ENCODE measurements at regions of chr5 and their contacts with region 1.

Region 1: DNA sequence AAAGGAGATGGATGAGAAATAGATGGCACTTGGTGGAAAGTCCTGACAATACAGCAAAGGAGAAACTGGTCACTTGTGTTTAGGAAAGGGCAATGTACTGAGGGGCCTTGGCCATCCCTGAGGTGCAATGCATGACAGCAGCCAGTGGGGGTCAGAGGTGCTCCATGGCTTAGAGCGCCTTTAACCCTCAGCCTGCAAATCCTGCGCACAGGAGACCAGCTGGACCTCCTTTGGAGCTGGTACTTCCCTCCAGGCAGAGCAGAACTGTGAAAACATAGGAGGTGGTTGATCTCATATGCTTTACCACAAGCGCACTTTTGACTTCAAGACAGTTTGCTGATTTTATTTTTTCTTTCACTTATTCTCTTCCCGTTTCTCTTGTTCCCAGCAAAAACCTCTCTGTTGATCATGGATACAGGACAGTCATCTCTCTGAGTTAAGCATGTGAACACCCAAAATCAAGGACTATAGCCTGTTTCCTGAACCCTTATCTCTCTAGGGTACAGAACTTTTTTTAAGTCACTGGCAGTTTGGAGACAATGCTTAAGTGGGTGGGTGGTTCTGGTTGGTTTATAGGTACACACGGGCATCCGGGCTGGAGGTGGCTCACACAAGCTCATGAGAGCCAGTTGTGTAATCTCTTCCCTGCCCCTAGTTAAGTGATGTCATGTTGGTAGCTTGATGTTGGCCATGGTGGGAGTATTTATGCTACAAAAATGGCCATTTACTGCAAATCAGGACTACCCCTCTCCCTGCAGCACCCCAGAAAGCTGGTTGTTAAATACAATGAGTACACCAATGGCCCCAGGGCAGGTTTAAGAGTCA is 37.6 kb upstream of the ANKRD55 start:
- DNase-seq: peak; percentile 83 to 84
- H3K4me3 ChIP-seq: no peak overlapping the region
- H3K27ac ChIP-seq: peak overlapping the region; percentile 44
- H3K4me1 ChIP-seq: peaks cover 11% of the 10 kb centered on the region
- H3K27me3 ChIP-seq: no peaks in the 10 kb centered on the region
- CTCF ChIP-seq: peak; percentile 98

Region 2: GRCh38 chr5:55982957-55983381 is 287.8 kb before region 1 on chr5:
- CTCF ChIA-PET with region 1: interaction called, 8 read pairs
- POLR2A ChIA-PET with region 1: no interaction called
- intact Hi-C with region 1: loop called (anchors 1 kb)
- DNase-seq: no peak
- H3K4me3 ChIP-seq: no peak overlapping the region
- H3K27ac ChIP-seq: no peak overlapping the region
- H3K4me1 ChIP-seq: no peaks in the 10 kb centered on the region
- H3K27me3 ChIP-seq: no peaks in the 10 kb centered on the region
- CTCF ChIP-seq: peak; percentile 43

Region 3: DNA sequence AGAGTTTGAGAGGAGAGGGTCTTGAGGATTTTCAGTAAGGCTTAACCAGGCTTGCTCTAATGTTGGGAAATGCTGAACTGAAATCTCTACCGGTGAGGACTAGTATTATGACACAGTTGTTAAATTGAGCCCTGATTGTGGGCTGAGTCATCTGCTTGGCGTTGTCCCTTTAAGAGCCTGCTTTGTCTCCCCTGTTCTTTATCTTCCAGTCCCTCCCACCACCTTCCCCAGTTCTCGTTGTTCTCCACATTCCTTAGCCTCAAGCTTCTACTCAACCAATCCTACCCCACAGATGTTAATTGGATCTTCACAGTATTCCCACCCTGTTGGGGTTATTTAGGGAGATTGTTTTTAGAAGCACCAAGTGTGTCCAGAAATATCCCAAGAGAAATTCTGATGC is 95.3 kb before region 1 on chr5:
- CTCF ChIA-PET with region 1: no interaction called
- POLR2A ChIA-PET with region 1: no interaction called
- intact Hi-C with region 1: no loop called
- DNase-seq: peak; percentile 16 to 57
- H3K4me3 ChIP-seq: no peak overlapping the region
- H3K27ac ChIP-seq: no peak overlapping the region
- H3K4me1 ChIP-seq: peaks cover 21% of the 10 kb centered on the region
- H3K27me3 ChIP-seq: no peaks in the 10 kb centered on the region
- CTCF ChIP-seq: no peak

Region 4: GRCh38 chr5:56259002-56259511 is 11.7 kb before region 1 on chr5:
- CTCF ChIA-PET with region 1: no interaction called
- POLR2A ChIA-PET with region 1: no interaction called
- intact Hi-C with region 1: no loop called
- DNase-seq: peak in 1 of 2 experiments; percentile 67
- H3K4me3 ChIP-seq: no peak overlapping the region
- H3K27ac ChIP-seq: peak overlapping the region; percentile 40
- H3K4me1 ChIP-seq: peaks cover 10% of the 10 kb centered on the region
- H3K27me3 ChIP-seq: no peaks in the 10 kb centered on the region
- CTCF ChIP-seq: no peak

Region 5: GRCh38 chr5:56286015-56286884 is 15.5 kb after region 1 on chr5:
- CTCF ChIA-PET with region 1: no interaction called
- POLR2A ChIA-PET with region 1: no interaction called
- intact Hi-C with region 1: no loop called
- DNase-seq: no peak
- H3K4me3 ChIP-seq: no peak overlapping the region
- H3K27ac ChIP-seq: no peak overlapping the region
- H3K4me1 ChIP-seq: peaks cover 19% of the 10 kb centered on the region
- H3K27me3 ChIP-seq: no peaks in the 10 kb centered on the region
- CTCF ChIP-seq: no peak

Region 6: GRCh38 chr5:56429082-56429891 is 158.5 kb after region 1 on chr5:
- CTCF ChIA-PET with region 1: no interaction called
- POLR2A ChIA-PET with region 1: no interaction called
- intact Hi-C with region 1: loop called (anchors 5 kb)
- DNase-seq: peak; percentile 62 to 72
- H3K4me3 ChIP-seq: no peak overlapping the region
- H3K27ac ChIP-seq: no peak overlapping the region
- H3K4me1 ChIP-seq: 0 out of 2 replicates have a peak, but pooled peaks cover 6% of the 10 kb centered on the region
- H3K27me3 ChIP-seq: no peaks in the 10 kb centered on the region
- CTCF ChIP-seq: no peak

Region 7: GRCh38 chr5:56543441-56544390 is 272.9 kb after region 1 on chr5:
- CTCF ChIA-PET with region 1: no interaction called
- POLR2A ChIA-PET with region 1: no interaction called
- intact Hi-C with region 1: loop called (anchors 2 kb)
- DNase-seq: peak; percentile 62 to 97
- H3K4me3 ChIP-seq: no peak overlapping the region
- H3K27ac ChIP-seq: peak overlapping the region; percentile 96
- H3K4me1 ChIP-seq: peaks cover 39% of the 10 kb centered on the region
- H3K27me3 ChIP-seq: no peaks in the 10 kb centered on the region
- CTCF ChIP-seq: no peak

Region 8: GRCh38 chr5:56814963-56815658 is 544.3 kb after region 1 on chr5 and contains the start of gene MAP3K1:
- CTCF ChIA-PET with region 1: no interaction called
- POLR2A ChIA-PET with region 1: no interaction called
- intact Hi-C with region 1: loop called (anchors 1 kb)
- DNase-seq: peak; percentile 83 to 93
- H3K4me3 ChIP-seq: peak within 1 kb of the TSS; percentile 96
- H3K27ac ChIP-seq: peak within 1 kb of the TSS; percentile 91
- H3K4me1 ChIP-seq: peaks cover 50% of the 10 kb centered on the region
- H3K27me3 ChIP-seq: no peaks in the 10 kb centered on the region
- CTCF ChIP-seq: no peak
- total RNA-seq, gene MAP3K1: 21.8 and 26.1 TPM in 2 replicates

Region 9: DNA sequence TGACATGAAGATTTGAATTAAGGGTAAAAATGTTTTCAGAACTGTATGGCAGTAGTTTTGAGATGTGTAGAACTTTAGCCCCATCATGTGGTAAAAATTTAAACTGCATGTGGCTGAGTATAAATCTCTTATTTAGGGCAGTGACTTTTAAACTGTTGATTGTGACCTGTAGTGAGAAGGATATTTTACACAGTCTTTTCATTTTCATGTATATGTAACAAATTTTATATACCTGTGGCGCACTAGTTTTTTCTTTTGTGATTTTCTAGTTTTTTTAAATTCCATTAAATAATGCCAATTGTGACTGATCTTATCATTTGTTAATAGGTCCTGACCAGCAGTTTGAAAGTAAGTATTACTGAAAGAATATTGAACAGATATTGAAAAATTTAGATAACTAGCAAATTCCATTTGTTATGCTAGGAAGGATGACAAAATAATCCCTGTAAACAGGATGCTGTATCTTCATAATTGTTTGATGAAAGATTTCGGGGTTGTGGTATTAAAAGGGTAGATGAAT is 950.3 kb after region 1 on chr5:
- CTCF ChIA-PET with region 1: no interaction called
- POLR2A ChIA-PET with region 1: no interaction called
- intact Hi-C with region 1: loop called (anchors 2 kb)
- DNase-seq: peak in 1 of 2 experiments; percentile 59
- H3K4me3 ChIP-seq: no peak overlapping the region
- H3K27ac ChIP-seq: peak overlapping the region; percentile 38; the same call in 1 of the 2 replicates
- H3K4me1 ChIP-seq: peaks cover 32% of the 10 kb centered on the region
- H3K27me3 ChIP-seq: no peaks in the 10 kb centered on the region
- CTCF ChIP-seq: peak; percentile 91

Region 10: DNA sequence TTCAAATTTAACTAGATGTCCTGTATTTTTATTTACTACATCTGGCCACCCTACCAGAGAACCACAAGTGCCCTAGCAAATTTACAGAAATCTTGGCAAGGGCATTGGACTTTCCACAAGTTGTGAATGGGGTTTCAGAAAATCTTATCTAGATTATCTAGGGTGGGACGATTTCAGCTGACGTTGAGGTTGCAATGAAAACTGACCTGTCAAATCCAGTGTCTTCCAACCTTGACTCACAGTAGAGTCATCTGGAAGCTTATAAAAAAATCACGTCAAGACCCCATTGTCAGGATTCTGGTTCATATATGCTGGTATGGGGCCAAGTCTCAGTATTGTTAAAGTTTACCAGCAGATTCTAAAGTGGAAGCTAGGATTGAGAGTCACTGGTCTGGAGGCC is 1321.5 kb after region 1 on chr5:
- CTCF ChIA-PET with region 1: no interaction called
- POLR2A ChIA-PET with region 1: no interaction called
- intact Hi-C with region 1: no loop called
- DNase-seq: no peak
- H3K4me3 ChIP-seq: no peak overlapping the region
- H3K27ac ChIP-seq: no peak overlapping the region
- H3K4me1 ChIP-seq: no peaks in the 10 kb centered on the region
- H3K27me3 ChIP-seq: no peaks in the 10 kb centered on the region
- CTCF ChIP-seq: no peak

Measured in PC-9 (cell line).